Panc1 (cell line): ENCODE measurements at regions of chr4 and their contacts with region 1.

Region 1: DNA sequence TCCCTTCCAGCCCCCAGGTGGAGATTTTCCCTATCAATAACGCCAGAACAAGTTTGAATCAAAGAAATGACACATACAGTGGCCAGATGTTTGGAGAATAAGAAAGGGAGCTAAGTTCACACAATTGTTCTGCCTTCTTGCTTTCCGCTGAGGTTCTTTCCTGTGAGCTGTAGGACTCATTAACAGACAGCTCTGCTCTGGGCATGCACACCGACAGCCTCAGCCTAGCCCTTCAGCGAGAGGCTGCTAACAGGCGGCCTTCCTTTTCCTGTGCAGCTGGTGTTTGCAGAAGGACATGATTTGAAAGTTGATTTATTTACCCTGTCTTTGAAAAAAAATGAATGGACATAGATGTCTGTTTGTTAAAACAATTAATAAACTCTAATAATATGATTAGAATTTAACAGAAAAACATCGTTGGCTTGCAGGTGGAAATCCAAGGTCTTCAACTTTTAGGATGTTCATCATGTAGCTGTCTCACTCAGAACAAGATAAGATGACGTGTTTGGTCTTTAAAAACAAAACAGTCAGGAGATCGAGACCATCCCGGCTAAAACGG is 183.3 kb downstream of the KDR start:
- DNase-seq: no peak
- ATAC-seq: no peak
- H3K4me3 ChIP-seq: no peak overlapping the region
- H3K27ac ChIP-seq: no peak overlapping the region
- H3K4me1 ChIP-seq: no peaks in the 10 kb centered on the region
- H3K27me3 ChIP-seq: no peaks in the 10 kb centered on the region
- CTCF ChIP-seq: no peak

Region 2: GRCh38 chr4:54954656-54955326 is 12.7 kb after region 1 on chr4:
- CTCF ChIA-PET with region 1: interaction called, 10 read pairs
- POLR2A ChIA-PET with region 1: no interaction called
- in situ Hi-C with region 1: no loop called
- intact Hi-C with region 1: no loop called
- DNase-seq: no peak
- ATAC-seq: no peak
- H3K4me3 ChIP-seq: no peak overlapping the region
- H3K27ac ChIP-seq: no peak overlapping the region
- H3K4me1 ChIP-seq: no peaks in the 10 kb centered on the region
- H3K27me3 ChIP-seq: no peaks in the 10 kb centered on the region
- CTCF ChIP-seq: no peak

Region 3: DNA sequence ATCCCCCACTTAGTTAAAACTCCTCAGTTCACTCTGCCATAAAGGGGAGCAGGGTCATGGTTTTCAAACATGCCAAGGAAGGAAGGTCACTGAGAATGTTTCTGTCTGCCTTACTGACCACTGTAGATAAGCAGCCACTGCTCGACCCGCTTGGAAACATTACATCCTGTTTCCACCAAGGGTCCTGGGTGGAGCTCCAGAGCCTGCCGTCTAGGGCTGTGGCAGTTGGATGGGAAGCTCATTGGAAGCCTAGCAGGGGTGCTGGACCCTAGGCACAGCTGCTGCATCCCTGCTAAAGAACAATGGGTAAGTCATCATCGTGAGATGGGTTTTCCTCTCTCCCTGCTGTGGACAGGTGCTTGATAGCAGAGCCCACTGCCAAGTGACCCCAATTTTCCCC is 327.9 kb after region 1 on chr4:
- CTCF ChIA-PET with region 1: no interaction called
- POLR2A ChIA-PET with region 1: no interaction called
- in situ Hi-C with region 1: no loop called
- intact Hi-C with region 1: no loop called
- DNase-seq: no peak
- ATAC-seq: no peak
- H3K4me3 ChIP-seq: no peak overlapping the region
- H3K27ac ChIP-seq: no peak overlapping the region
- H3K4me1 ChIP-seq: no peaks in the 10 kb centered on the region
- H3K27me3 ChIP-seq: peaks cover 4% of the 10 kb centered on the region; the same call in 1 of the 2 replicates
- CTCF ChIP-seq: no peak